Motor neuron (in vitro differentiated cells): ENCODE measurements at regions of chr15 and their contacts with region 1.

Region 1: GRCh38 chr15:90954712-90955671 is at the start of gene RCCD1:
- ATAC-seq: peak; percentile 86 to 93 (median 90)
- H3K4me3 ChIP-seq: peak within 1 kb of the TSS; percentile 55 to 92 (median 61)
- H3K27ac ChIP-seq: peak within 1 kb of the TSS; percentile 55 to 73
- H3K4me1 ChIP-seq: peaks cover 7 to 12% of the 10 kb centered on the region in 2 donors
- total RNA-seq, gene RCCD1: 5.7 to 16.8 (median 6.7) TPM

Region 2: GRCh38 chr15:91032919-91033803 is 78.2 kb after region 1 on chr15:
- in situ Hi-C with region 1: loop called in 1 of 9 experiments (anchors 10 kb)
- ATAC-seq: peak in 2 of 8 experiments; percentile 29 to 80
- H3K4me3 ChIP-seq: no peak overlapping the region
- H3K27ac ChIP-seq: no peak overlapping the region
- H3K4me1 ChIP-seq: no peaks in the 10 kb centered on the region